Activated T-helper 1 cell treated with anti-CD3 and anti-CD28 coated beads, Interleukin-12 subunit alpha, Interleukin-12 subunit beta, Interleukin-2, Interleukin-4 antibody, amounts not matched to agents 30 ng/mL and 10 ng/mL and 1 ng/mL, durations not matched to agents 14 hours and 24 hours and 36 hours (primary cell): ENCODE measurements at regions of chr11 and their contacts with region 1.

Region 1: DNA sequence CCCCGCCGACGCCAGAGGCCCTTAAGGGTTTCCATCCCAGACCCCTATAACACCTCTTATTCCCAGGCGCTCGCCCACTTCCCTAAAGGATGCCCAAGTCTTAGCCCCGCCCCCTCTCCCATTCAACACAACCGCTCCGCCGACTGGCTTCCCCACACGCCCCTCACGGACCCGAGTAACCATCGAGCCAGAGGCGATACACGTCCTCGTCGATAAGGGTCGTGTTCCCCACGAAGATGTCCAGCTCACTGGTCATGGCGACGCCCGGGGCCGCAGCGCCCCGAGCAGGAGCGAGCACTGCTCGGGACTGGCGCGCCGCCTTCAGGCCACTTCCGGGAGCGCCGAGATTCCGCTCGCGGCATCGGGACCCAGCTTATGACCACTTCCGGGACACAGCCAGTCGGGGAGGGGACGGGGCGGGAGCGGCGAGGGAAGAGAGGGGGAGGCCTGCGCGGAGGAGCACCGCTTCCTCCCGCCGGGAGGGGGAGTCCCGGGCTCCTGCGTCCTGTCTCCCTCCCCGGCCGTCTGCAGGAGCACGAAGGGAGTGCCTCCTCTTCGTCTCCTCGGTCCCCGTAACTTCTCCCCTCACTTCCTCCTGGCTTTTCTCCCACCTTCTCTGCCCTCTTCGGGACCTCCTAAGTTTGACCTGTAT is at the start of gene FIBP:
- DNase-seq: peak; percentile 90
- H3K4me3 Mint-ChIP-seq: peak within 1 kb of the TSS; percentile 99
- H3K27ac Mint-ChIP-seq: peak within 1 kb of the TSS; percentile 96
- H3K4me1 Mint-ChIP-seq: peaks cover 58% of the 10 kb centered on the region
- H3K27me3 Mint-ChIP-seq: no peaks in the 10 kb centered on the region
- total RNA-seq, gene FIBP: 86.8 and 93.2 TPM in 2 replicates

Region 2: DNA sequence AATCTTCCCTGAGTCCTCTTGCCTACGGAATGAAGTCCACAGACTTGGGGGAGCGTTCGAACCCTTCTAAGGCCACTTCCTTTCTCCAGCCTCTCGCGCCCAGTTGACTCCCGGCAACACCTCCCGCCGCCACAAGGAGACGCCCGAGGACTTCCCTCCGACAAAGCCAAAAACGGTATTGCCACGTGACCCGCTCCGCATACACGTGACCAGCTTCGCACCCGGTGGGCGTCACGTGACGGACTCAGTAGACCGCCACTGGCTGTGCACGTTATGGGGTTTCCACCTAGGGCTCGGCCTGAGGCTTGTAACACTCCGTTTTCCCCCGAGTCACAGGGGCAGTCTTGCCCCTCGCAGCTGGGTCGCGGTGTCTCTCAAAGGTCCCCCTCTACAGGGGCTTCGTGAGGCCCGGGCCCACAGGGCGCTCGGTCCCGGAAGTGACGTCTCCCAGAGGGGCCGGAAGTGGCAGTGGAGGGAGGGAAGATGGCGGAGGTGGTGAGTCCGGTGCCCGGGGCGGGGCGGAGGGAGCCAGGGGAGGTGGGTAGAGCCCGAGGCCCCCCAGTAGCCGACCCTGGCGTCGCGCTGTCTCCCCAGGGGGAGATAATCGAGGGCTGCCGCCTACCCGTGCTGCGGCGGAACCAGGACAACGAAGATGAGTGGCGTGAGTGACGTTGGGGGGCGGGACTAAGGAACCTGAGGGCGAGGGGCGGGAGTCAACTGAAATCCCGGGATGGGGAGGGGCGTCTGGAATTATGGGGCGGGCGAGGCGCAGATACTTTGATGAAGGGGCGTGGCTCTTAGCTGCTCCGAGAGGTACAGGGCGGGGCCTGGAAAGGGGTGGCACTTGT is 176.3 kb before region 1 on chr11 and contains the start of gene KAT5:
- intact Hi-C with region 1: loop called (anchors 1 kb)
- DNase-seq: peak; percentile 98
- H3K4me3 Mint-ChIP-seq: peak within 1 kb of the TSS; percentile 96
- H3K27ac Mint-ChIP-seq: peak within 1 kb of the TSS; percentile 98
- H3K4me1 Mint-ChIP-seq: peaks cover 29% of the 10 kb centered on the region
- H3K27me3 Mint-ChIP-seq: no peaks in the 10 kb centered on the region
- total RNA-seq, gene KAT5: 68.1 and 75.0 TPM in 2 replicates

Region 3: DNA sequence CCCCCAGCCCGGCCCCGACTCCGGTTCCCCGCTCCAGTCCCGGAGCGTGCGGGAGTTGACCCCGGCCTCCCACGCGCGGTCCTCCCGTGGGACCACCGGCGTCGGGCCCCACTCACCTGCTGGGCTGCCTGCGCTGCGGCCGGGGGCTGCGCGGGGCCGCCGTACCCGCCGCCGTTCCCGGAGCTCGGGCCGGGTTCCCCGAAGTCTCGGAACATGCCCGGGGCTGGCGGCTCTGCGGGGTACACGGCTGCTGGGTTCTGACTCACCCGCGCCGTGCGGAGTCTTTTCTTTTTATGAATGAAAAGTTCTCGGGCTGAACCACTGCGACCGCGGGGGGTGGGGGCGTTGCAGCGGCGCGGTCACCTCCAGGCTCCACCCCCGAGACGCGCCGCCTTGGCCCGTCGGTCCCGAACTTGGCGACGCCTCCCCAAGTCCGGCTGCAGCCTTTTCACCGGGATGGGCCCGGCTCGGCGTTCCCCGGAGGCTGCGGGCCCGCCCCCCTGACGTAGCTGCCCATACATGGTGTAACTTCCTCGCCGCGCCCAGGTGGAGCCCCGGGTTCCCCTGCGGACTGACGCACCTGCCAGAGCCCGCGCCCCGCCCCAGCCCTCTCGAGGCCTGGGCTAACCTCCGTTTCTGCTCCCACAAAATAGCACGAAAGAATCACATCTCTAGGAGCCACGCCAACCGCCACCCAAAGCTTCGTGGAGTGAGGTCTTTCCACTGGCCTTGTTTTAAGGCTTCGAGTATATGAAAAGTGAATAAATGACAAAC is 12.0 kb after region 1 on chr11 and contains the start of gene FOSL1:
- intact Hi-C with region 1: loop called (anchors 1 kb)
- DNase-seq: peak; percentile 89
- H3K4me3 Mint-ChIP-seq: peak within 1 kb of the TSS; percentile 82
- H3K27ac Mint-ChIP-seq: peak within 1 kb of the TSS; percentile 67
- H3K4me1 Mint-ChIP-seq: peaks cover 23% of the 10 kb centered on the region
- H3K27me3 Mint-ChIP-seq: peaks cover 9% of the 10 kb centered on the region
- total RNA-seq, gene FOSL1: 31.7 and 33.5 TPM in 2 replicates

Region 4: GRCh38 chr11:65927904-65928397 is 39.7 kb after region 1 on chr11:
- intact Hi-C with region 1: loop called (anchors 2 kb)
- DNase-seq: peak; percentile 72
- H3K4me3 Mint-ChIP-seq: peak overlapping the region; percentile 48
- H3K27ac Mint-ChIP-seq: peak overlapping the region; percentile 92
- H3K4me1 Mint-ChIP-seq: peaks cover 40% of the 10 kb centered on the region
- H3K27me3 Mint-ChIP-seq: peaks cover under 1% of the 10 kb centered on the region

Region 5: GRCh38 chr11:65988791-65989592 is 100.7 kb after region 1 on chr11:
- intact Hi-C with region 1: loop called (anchors 1 kb)
- DNase-seq: peak; percentile 88
- H3K4me3 Mint-ChIP-seq: no peak overlapping the region
- H3K27ac Mint-ChIP-seq: peak overlapping the region; percentile 79
- H3K4me1 Mint-ChIP-seq: peaks cover 8% of the 10 kb centered on the region
- H3K27me3 Mint-ChIP-seq: no peaks in the 10 kb centered on the region